Activated CD4-positive, alpha-beta memory T cell treated with anti-CD3 and anti-CD28 coated beads for 36 hours (primary cell): ENCODE measurements at regions of chr12 and their contacts with region 1.

Region 1: GRCh38 chr12:54425702-54426101 is 6.6 kb upstream of the ITGA5 start:
- DNase-seq: no peak
- H3K4me3 Mint-ChIP-seq: no peak overlapping the region
- H3K27ac Mint-ChIP-seq: no peak overlapping the region
- H3K4me1 Mint-ChIP-seq: peaks cover 7% of the 10 kb centered on the region
- H3K27me3 Mint-ChIP-seq: peaks cover 3% of the 10 kb centered on the region

Region 2: DNA sequence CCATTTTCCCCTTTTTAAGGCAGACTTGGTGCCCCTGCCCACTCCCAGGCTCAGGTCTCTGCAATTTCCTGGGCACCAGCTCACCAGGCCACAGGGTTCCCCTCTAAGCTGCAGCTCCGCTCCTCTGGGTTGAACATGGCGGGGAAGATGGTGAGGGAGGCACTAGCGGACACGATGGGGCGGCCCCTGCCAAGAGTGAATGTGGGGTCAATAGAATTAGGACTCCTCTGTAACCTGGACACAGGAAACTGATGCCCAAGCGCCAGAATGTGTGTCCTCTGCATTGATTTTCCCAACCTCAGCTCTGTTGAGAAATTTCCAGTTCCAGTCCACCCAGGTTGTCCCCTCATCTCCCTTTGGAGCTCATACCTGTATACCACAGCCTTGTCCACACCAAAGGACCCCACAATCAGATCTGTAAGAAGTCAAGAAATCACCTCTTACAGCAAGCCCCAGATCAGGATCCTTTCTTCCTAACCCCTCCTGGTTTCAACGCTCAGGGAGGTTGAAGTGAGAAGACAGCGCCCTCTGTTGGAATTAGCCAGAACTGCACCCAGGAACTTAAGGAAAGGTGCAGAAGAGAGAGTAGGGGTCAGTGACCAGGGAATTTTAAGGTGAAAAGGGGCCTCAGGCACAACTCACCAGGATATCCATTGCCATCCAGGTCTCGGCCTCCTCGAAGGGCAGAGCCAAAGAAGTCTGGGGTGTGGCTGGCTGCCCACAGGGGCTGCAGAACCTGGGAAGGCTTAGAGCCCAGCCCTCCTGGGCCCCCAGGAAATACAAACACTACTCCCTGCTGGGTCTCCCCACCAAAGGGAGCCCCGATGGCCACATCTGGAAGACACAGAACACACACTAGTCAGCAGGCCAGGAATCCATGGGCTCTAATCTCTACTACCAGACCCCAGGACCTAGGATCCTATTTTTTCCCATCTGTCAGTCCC is 21.4 kb before region 1 on chr12:
- CTCF ChIA-PET with region 1: interaction called, 693 read pairs
- POLR2A ChIA-PET with region 1: interaction called, 3 read pairs
- intact Hi-C with region 1: no loop called
- DNase-seq: peak; percentile 72
- H3K4me3 Mint-ChIP-seq: no peak overlapping the region
- H3K27ac Mint-ChIP-seq: peak overlapping the region; percentile 58
- H3K4me1 Mint-ChIP-seq: peaks cover 15% of the 10 kb centered on the region
- H3K27me3 Mint-ChIP-seq: no peaks in the 10 kb centered on the region